ENCODE measurements at regions of chr22 and their contacts with region 1.

Region 1: DNA sequence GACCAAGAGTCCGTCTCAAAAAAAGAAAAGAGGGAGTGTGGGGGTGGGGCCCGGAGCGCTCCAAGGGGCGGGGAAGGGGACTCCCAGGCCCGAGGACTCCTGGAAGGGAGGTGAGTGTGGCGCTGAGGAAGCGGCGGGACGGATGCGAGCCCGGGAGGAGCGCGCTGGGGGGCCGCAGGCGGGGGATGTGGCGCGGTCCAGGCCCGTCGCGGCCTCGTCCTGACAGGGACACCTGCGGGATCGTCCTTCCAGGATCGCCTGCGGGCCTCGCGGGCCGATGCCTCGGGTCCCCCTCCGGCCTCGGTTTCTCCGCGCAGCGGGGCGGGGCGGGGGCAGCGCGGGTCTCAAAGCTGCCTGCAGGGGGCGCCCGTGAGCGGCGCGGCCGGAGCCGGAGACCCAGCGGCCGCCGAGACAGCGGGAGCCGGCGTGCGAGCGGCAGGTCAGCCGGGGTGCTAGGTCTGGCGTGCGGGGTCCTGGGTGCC is 3.8 kb upstream of the ADORA2A start:
- DNase-seq: peak; percentile 60
- H3K4me3 ChIP-seq: peak overlapping the region; percentile 49
- H3K27ac ChIP-seq: no peak overlapping the region
- H3K4me1 ChIP-seq: no peaks in the 10 kb centered on the region
- H3K27me3 ChIP-seq: peaks cover 16% of the 10 kb centered on the region
- CTCF ChIP-seq: peak; percentile 88

Region 2: DNA sequence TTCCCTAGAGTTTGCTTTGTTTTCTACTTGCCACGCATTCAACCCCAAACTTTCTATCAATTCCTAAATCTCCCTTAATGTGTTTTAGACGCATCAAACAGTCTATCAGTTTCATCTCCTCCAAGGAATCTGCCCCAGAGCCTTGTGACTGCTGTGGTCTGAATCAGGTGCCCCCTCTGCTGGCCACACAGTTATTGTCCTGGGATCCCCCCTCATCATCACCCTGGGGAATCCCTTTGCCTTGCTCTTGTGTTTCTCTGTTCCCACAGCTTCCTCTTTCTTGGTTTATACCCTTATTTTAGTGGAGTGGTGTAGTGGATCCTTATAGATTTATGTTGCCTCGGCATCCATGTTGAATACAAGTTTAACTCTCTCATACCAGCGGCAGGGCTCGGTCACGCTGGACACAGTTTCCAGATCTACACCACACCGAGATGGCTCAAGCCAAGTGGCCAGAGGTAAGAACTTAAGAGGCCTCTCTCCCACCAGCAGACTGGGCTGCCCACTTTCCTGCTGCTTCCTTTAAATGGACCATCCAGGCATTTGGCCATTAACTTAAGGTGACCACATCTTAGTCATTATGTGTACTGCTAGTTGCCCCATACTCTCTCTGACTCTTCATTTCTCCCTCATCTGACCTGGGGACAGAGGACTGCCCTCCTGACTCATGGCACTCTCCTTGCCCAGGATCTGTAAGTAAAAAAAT is 79.7 kb after region 1 on chr22:
- intact Hi-C with region 1: loop called (anchors 5 kb)
- DNase-seq: peak; percentile 52
- H3K4me3 ChIP-seq: no peak overlapping the region
- H3K27ac ChIP-seq: no peak overlapping the region
- H3K4me1 ChIP-seq: no peaks in the 10 kb centered on the region
- H3K27me3 ChIP-seq: no peaks in the 10 kb centered on the region
- CTCF ChIP-seq: peak; percentile 40

Region 3: GRCh38 chr22:24532103-24532520 is 108.6 kb after region 1 on chr22:
- intact Hi-C with region 1: no loop called
- DNase-seq: no peak
- H3K4me3 ChIP-seq: no peak overlapping the region
- H3K27ac ChIP-seq: no peak overlapping the region
- H3K4me1 ChIP-seq: no peaks in the 10 kb centered on the region
- H3K27me3 ChIP-seq: no peaks in the 10 kb centered on the region
- CTCF ChIP-seq: no peak

Measured in colonic mucosa (tissue), 4 donors.